ENCODE measurements at regions of chr7 and their contacts with region 1.

Region 1: DNA sequence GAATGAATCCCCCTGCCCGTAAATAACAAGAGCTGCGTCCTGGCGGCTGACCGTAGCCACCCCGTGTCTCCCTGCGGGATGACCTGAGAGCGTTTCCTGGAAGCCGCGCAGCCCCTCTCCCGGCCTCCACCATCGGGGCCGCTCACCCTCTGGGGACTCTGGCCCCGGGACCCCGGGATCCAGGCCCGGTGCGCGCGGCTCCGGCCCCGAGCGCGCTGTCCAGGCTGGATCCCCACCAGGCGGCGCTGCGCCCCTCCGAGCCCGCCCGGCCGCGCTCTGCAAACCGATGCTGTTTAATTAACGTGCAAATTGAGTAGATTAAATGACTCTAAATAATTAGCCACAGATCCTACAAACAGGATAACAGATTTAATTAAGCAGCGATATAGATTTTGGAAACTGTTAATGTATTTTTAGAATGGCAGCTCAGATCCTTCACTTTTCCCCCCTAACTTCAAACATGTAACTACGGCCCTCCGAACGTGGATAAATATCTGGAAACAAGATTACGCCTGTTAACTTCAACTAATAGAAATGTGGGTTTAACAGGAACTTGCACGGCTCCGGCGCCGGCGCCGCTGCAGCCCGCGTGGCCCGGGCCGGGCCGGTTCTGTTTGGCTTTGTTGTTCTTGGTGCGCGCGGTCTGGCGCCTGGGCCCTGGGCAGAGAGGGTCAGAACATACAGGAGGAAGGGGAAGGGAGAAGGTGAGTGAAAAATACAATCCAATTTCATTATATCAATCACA is 7.1 kb upstream of the UNCX start:
- DNase-seq: peak; percentile 95
- H3K4me3 ChIP-seq: no peak overlapping the region; a peak in 1 of 4 replicates
- H3K27ac ChIP-seq: no peak overlapping the region
- H3K4me1 ChIP-seq: peaks cover 0 to 3% of the 10 kb centered on the region in 2 experiments; a peak in 1 of 4 replicates
- H3K27me3 ChIP-seq: peaks cover 94% of the 10 kb centered on the region
- CTCF ChIP-seq: peak; percentile 98
- EP300 ChIP-seq: no peak
- RAD21 ChIP-seq: peak; percentile 72

Region 2: DNA sequence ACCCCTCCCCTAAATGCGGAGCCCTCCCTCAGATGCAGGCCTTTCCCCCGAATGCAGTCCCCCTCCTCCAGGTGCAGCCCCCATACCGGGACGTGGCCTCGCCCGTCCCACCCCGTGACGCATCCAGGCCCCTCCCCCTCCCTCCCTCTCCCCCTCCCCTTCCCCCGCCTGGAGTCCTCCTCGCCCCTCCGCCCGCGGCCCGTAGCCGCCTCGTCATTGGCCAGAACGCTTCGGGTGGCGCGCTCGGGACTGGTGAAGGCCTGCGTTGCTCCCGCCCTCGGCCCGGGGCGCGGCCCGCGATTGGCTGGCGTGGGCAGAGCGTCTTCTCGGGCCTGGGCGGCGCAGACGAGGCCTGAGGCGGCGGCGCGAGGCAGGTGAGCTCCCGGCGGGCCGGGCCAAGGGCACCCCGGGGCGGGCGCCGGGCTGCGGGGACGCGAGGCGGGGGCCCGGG is 409.3 kb before region 1 on chr7:
- CTCF ChIA-PET with region 1: no interaction called
- POLR2A ChIA-PET with region 1: no interaction called
- DNase-seq: peak; percentile 100
- H3K4me3 ChIP-seq: peak overlapping the region; percentile 55; a peak in 3 of 4 replicates
- H3K27ac ChIP-seq: peak overlapping the region in 1 of 2 experiments; percentile 83; a peak in 1 of 4 replicates
- H3K4me1 ChIP-seq: peaks cover 14 to 28% of the 10 kb centered on the region in 2 experiments
- H3K27me3 ChIP-seq: no peaks in the 10 kb centered on the region
- CTCF ChIP-seq: no peak
- EP300 ChIP-seq: no peak
- RAD21 ChIP-seq: no peak

Region 3: DNA sequence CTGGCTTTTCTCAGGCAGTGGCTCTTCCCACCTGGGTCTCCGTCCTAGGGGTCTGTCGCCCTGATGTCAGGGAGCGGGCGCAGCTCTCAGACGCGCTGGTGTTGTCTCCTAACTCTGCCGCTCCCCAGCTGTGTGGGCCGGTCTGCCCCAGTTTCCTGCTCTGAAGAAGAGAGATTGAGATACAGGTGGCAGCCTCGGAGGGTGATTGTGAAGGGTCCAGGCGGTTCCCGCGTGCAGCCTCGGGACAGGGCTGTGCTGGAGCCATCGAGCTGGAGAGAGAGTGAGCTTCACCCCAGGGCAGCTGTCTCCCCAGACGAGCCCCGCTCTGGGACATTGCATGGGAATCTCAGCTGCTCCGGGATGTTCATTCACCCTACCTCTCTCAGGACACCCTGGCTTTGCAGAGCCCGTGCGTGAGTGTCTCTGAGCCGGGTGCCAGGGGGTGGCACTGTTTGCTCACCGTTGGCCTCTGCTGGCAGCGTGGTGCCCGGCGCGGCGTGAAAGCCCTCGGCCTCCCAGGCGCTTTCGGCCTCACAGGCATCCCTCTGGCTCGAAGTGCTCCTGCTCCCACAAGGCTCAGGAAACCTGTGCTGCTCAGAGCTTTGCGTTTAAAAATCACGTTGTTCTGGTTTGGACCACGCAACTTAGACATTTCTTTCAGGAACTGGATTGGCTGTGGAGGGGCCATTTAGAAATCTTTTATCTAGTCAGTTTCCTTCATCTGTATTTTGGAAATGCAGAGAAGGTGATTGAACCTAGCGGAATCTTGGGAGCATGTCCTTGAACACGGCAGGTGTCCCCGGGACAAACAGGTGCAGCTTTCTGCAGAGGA is 31.8 kb before region 1 on chr7:
- CTCF ChIA-PET with region 1: interaction called, 36 read pairs
- POLR2A ChIA-PET with region 1: no interaction called
- DNase-seq: peak; percentile 90
- H3K4me3 ChIP-seq: no peak overlapping the region
- H3K27ac ChIP-seq: no peak overlapping the region
- H3K4me1 ChIP-seq: peaks cover 0 to 3% of the 10 kb centered on the region in 2 experiments; a peak in 1 of 4 replicates
- H3K27me3 ChIP-seq: peaks cover 29% of the 10 kb centered on the region; the same call in 1 of the 2 replicates
- CTCF ChIP-seq: peak; percentile 75
- EP300 ChIP-seq: no peak
- RAD21 ChIP-seq: peak; percentile 90

Region 4: DNA sequence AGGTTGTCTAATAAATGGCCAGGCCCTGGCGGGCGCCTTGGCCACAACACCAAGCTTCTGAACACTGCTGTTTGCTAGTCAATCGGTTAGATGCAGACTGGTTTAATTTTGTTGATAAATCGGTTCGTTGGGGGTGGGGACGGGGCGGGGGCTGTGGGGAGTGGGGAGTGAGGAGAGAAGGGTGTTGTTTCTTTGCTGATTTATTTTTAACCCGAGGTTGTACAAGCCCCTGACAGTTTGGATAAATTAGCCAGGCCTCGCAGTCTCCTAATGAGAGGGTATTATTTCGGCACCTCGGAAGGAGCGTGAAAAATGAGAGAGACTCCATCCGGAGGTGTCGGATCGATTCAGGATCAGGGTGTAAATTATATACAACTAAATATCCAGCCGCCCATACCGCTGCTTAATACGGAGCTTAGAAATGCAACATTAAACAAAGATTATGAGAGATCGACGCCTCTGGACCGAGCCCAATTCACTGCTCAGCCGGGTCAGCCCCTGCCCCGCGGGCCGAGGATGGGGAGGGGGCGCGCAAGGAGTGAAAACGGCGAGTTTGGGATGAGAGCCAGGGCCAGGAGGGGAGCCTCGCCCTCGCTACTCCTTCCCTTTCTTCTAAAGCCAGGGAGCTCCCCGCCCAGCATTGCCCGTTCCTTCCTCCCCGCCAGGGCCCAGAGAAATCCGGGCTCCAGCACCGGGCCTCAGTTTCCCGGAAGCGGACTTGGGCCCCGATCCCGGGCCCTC is 15.1 kb after region 1 on chr7:
- CTCF ChIA-PET with region 1: interaction called, 49 read pairs
- POLR2A ChIA-PET with region 1: no interaction called
- DNase-seq: no peak
- H3K4me3 ChIP-seq: no peak overlapping the region
- H3K27ac ChIP-seq: no peak overlapping the region
- H3K4me1 ChIP-seq: no peaks in the 10 kb centered on the region
- H3K27me3 ChIP-seq: peaks cover 92% of the 10 kb centered on the region
- CTCF ChIP-seq: no peak
- EP300 ChIP-seq: no peak
- RAD21 ChIP-seq: no peak

Region 5: GRCh38 chr7:1297017-1297960 is 71.7 kb after region 1 on chr7:
- CTCF ChIA-PET with region 1: interaction called, 16 read pairs
- POLR2A ChIA-PET with region 1: no interaction called
- DNase-seq: peak; percentile 46
- H3K4me3 ChIP-seq: no peak overlapping the region
- H3K27ac ChIP-seq: no peak overlapping the region
- H3K4me1 ChIP-seq: no peaks in the 10 kb centered on the region
- H3K27me3 ChIP-seq: peaks cover 89% of the 10 kb centered on the region
- CTCF ChIP-seq: no peak
- EP300 ChIP-seq: no peak
- RAD21 ChIP-seq: no peak

Region 6: GRCh38 chr7:1412322-1413261 is 187.0 kb after region 1 on chr7:
- CTCF ChIA-PET with region 1: interaction called, 218 read pairs
- POLR2A ChIA-PET with region 1: no interaction called
- DNase-seq: peak; percentile 100
- H3K4me3 ChIP-seq: no peak overlapping the region; a peak in 2 of 4 replicates
- H3K27ac ChIP-seq: no peak overlapping the region
- H3K4me1 ChIP-seq: peaks cover 0 to 5% of the 10 kb centered on the region in 2 experiments; a peak in 2 of 4 replicates
- H3K27me3 ChIP-seq: peaks cover 76% of the 10 kb centered on the region
- CTCF ChIP-seq: peak; percentile 92
- EP300 ChIP-seq: no peak
- RAD21 ChIP-seq: peak; percentile 80

Region 7: DNA sequence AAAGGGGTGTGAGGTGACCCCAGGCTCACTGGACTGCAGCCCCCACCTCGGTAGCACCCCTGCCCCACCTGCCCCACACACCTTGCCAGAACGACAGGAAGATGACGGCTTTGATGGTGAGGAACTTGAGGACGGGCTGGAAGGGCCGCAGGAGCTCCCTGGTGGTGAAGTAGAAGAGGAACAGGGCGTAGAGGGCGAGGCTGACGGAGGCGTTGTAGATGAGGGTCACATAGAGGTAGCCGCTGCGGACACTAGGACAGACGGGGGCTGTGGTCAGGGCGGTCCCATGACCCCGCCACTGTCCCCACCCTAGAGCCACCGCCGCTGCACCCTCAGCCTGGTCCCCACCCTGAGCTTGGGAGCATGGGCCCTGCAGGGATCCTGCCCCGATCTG is 322.8 kb after region 1 on chr7:
- CTCF ChIA-PET with region 1: no interaction called
- POLR2A ChIA-PET with region 1: no interaction called
- DNase-seq: no peak
- H3K4me3 ChIP-seq: no peak overlapping the region
- H3K27ac ChIP-seq: no peak overlapping the region
- H3K4me1 ChIP-seq: no peaks in the 10 kb centered on the region
- H3K27me3 ChIP-seq: no peaks in the 10 kb centered on the region
- CTCF ChIP-seq: peak; percentile 24; the same call in 1 of the 2 replicates
- EP300 ChIP-seq: no peak
- RAD21 ChIP-seq: no peak